Sigmoid colon (tissue), 7 donors: ENCODE measurements at regions of chr17 and their contacts with region 1.

Region 1: GRCh38 chr17:80855948-80856862 is 135.4 kb upstream of the CHMP6 start:
- DNase-seq: peak; percentile 90
- H3K4me3 ChIP-seq: no peak overlapping the region
- H3K27ac ChIP-seq: peak overlapping the region; percentile 22 to 76 (median 63)
- H3K4me1 ChIP-seq: peaks cover 0 to 48% (median 37%) of the 10 kb centered on the region in 4 donors
- H3K27me3 ChIP-seq: no peaks in the 10 kb centered on the region
- CTCF ChIP-seq: no peak
- EP300 ChIP-seq: peak in 1 of 4 donors; percentile 79
- POLR2A ChIP-seq: no peak

Region 2: GRCh38 chr17:80663781-80664206 is 192.4 kb before region 1 on chr17:
- intact Hi-C with region 1: no loop called
- DNase-seq: peak; percentile 88
- H3K4me3 ChIP-seq: no peak overlapping the region
- H3K27ac ChIP-seq: peak overlapping the region; percentile 10 to 79 (median 76)
- H3K4me1 ChIP-seq: peaks cover 0 to 25% (median 21%) of the 10 kb centered on the region in 4 donors
- H3K27me3 ChIP-seq: no peaks in the 10 kb centered on the region
- CTCF ChIP-seq: no peak
- EP300 ChIP-seq: peak in 1 of 4 donors; percentile 17
- POLR2A ChIP-seq: no peak

Region 3: DNA sequence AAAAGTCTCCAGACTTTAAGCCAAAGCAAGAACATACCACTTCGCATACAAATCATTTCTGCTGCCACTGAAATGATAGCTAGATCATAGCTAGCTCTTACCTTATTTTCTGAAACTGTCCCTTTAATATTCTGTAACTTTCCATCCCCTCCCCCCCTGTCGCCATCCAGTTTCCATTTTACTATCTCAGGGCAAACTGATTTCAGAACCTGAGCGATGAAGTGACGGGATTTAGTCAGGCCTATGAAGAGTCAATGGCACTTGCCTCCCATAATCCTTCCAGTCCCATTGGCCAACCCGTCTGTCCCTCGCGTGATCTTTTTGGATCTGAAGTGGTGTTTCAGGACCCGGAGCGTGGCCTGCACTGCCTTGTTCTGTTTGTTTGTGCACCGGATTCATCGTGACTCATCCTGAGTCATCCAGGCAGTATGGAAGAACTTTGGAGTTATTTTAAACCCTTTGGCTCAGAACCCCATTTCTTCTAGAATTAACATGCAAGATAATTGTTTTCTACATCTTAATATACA is 64.4 kb before region 1 on chr17:
- intact Hi-C with region 1: loop called (anchors 5 kb)
- DNase-seq: peak; percentile 93
- H3K4me3 ChIP-seq: no peak overlapping the region
- H3K27ac ChIP-seq: peak overlapping the region; percentile 77 to 86 (median 78)
- H3K4me1 ChIP-seq: peaks cover 0 to 63% (median 45%) of the 10 kb centered on the region in 4 donors
- H3K27me3 ChIP-seq: no peaks in the 10 kb centered on the region
- CTCF ChIP-seq: no peak
- EP300 ChIP-seq: peak in 1 of 4 donors; percentile 53
- POLR2A ChIP-seq: no peak

Region 4: DNA sequence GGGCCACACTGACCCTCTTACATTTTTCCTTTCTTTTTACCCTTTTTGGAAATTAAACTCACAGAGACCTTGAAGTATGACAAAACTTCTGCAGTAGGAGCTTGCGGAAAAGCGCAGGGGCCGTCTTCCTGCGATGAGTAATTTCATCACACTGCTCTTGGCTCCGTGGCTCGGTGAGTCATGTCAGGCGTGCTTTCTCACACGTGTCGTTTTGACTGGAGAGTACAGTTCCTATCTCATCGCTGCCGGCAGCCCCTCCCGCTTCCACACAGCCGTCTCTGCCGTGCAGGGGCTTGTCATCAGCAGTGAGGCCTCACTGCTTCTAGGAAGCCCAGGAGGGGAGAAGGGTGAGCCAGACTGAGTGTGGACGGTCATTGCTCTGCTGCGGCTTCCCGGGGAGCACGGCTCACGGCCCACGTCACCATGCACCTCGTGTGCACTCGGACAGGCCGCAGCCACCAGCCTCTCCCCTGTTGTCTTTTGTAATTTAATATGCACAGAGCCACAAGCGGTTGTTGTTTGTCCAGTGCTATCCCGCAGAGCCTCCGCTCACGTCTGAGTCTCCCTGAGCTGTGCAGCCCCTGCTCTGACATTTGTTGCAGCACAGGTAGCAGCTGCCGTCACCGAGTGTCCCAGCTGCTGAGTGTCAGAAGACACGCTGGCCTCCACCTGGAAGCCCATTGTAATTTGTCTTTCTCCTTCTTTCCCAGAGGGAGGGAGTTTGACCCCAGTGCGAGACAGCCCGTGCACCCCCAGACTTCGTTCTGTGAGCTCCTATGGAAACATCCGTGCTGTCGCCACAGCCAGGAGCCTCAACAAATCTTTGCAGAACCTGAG is 36.0 kb after region 1 on chr17:
- intact Hi-C with region 1: no loop called
- DNase-seq: peak; percentile 77
- H3K4me3 ChIP-seq: no peak overlapping the region
- H3K27ac ChIP-seq: peak overlapping the region; percentile 50 to 83 (median 78)
- H3K4me1 ChIP-seq: peaks cover 0 to 33% (median 29%) of the 10 kb centered on the region in 4 donors
- H3K27me3 ChIP-seq: no peaks in the 10 kb centered on the region
- CTCF ChIP-seq: no peak
- EP300 ChIP-seq: peak in 1 of 4 donors; percentile 74
- POLR2A ChIP-seq: no peak

Region 5: GRCh38 chr17:80991645-80992076 is 135.5 kb after region 1 on chr17 and contains the start of gene CHMP6:
- intact Hi-C with region 1: no loop called
- DNase-seq: peak; percentile 87
- H3K4me3 ChIP-seq: peak within 1 kb of the TSS; percentile 60 to 99 (median 98)
- H3K27ac ChIP-seq: peak within 1 kb of the TSS; percentile 66 to 82 (median 72)
- H3K4me1 ChIP-seq: peaks cover 0 to 62% (median 53%) of the 10 kb centered on the region in 4 donors
- H3K27me3 ChIP-seq: no peaks in the 10 kb centered on the region
- CTCF ChIP-seq: peak in 1 of 4 experiments; percentile 24
- EP300 ChIP-seq: no peak
- POLR2A ChIP-seq: no peak
- total RNA-seq, gene CHMP6: 15.7 to 28.2 (median 22.2) TPM